ENCODE measurements at regions of chr20 and their contacts with region 1.

Region 1: DNA sequence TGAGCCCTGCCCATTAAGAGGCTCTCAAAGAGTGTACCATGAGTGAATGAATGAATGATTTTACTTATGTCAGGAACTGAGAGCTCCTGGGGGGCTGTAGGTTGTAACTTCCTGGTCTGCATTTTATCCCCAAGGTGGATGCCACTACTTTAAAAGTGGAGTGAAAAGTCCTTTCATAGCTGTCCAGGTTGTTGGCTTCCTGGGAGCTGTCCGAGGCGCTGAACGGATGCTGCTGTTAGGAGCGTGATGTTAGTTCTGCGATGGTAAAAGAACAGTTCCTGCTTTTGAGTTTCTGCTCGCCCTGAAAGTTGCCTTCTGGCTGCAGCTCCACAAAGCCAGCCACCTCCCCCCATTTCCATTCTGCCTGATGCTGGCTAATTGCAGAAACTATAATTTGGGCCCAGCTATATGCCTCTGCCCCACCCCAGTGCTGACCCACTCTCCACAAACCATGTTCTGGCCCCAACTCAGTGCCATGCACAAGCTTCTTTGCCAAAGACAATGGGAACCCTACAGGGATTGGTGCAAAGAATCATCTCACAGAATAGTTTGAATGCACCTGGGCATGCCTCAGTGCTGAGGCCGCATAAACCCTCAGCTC is 330.9 kb upstream of the CDH4 start:
- DNase-seq: peak; percentile 8
- ATAC-seq: no peak
- H3K4me3 ChIP-seq: no peak overlapping the region
- H3K27ac ChIP-seq: no peak overlapping the region
- H3K4me1 ChIP-seq: no peaks in the 10 kb centered on the region
- H3K27me3 ChIP-seq: no peaks in the 10 kb centered on the region
- CTCF ChIP-seq: no peak
- POLR2A ChIP-seq: no peak
- RAD21 ChIP-seq: no peak

Region 2: DNA sequence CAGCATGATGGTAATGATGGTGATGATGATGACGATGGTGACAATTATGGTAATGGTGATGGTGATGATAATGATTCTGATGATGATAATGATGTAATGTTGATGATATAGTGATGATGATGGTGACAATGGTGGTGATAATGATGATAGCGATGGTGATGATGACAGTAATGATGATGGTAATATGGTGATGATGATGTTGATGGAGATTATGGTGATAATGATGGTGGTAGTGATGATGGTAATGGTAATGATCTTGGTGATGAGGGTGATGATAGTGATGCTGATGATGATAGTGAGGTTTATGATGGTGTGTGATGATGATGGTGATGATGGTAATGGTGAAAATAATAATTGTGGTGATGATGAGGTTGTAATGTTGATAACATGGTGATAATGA is 36.8 kb before region 1 on chr20:
- CTCF ChIA-PET with region 1: no interaction called
- POLR2A ChIA-PET with region 1: no interaction called
- dilution Hi-C with region 1: no loop called
- in situ Hi-C with region 1: no loop called
- intact Hi-C with region 1: loop called (anchors 1 kb)
- DNase-seq: no peak
- ATAC-seq: no peak
- H3K4me3 ChIP-seq: no peak overlapping the region
- H3K27ac ChIP-seq: no peak overlapping the region
- H3K4me1 ChIP-seq: no peaks in the 10 kb centered on the region
- H3K27me3 ChIP-seq: no peaks in the 10 kb centered on the region
- CTCF ChIP-seq: no peak
- POLR2A ChIP-seq: no peak
- RAD21 ChIP-seq: no peak

Region 3: GRCh38 chr20:61621035-61621730 is 700.1 kb after region 1 on chr20:
- CTCF ChIA-PET with region 1: no interaction called
- POLR2A ChIA-PET with region 1: no interaction called
- dilution Hi-C with region 1: no loop called
- in situ Hi-C with region 1: no loop called
- intact Hi-C with region 1: no loop called
- DNase-seq: no peak
- ATAC-seq: no peak
- H3K4me3 ChIP-seq: no peak overlapping the region
- H3K27ac ChIP-seq: no peak overlapping the region
- H3K4me1 ChIP-seq: no peaks in the 10 kb centered on the region
- H3K27me3 ChIP-seq: no peaks in the 10 kb centered on the region
- CTCF ChIP-seq: no peak
- POLR2A ChIP-seq: no peak
- RAD21 ChIP-seq: no peak